ENCODE measurements at regions of chr6 and their contacts with region 1.

Region 1: GRCh38 chr6:27753668-27754407 is 158.4 kb downstream of the OR2B2 start:
- DNase-seq: peak in 8 of 9 donors; percentile 38 to 69 (median 45)
- ATAC-seq: peak; percentile 22
- H3K4me3 ChIP-seq: peak overlapping the region; percentile 80
- H3K4me3 Mint-ChIP-seq: peak overlapping the region; percentile 81 to 99 (median 94)
- H3K27ac ChIP-seq: peak overlapping the region; percentile 96
- H3K27ac Mint-ChIP-seq: peak overlapping the region; percentile 84 to 100 (median 97)
- H3K4me1 ChIP-seq: peaks cover 6 to 20% of the 10 kb centered on the region in 2 donors
- H3K4me1 Mint-ChIP-seq: peaks cover 17 to 53% (median 39%) of the 10 kb centered on the region in 7 donors
- H3K27me3 ChIP-seq: no peaks in the 10 kb centered on the region
- H3K27me3 Mint-ChIP-seq: peaks cover 0 to 8% (median 0%) of the 10 kb centered on the region in 5 donors

Region 2: GRCh38 chr6:26103770-26104456 is 1649.9 kb before region 1 on chr6:
- CTCF ChIA-PET with region 1: no interaction called
- POLR2A ChIA-PET with region 1: no interaction called
- intact Hi-C with region 1: loop called in 1 of 2 experiments (anchors 1 kb)
- DNase-seq: peak; percentile 83 to 96 (median 95)
- ATAC-seq: peak; percentile 94
- H3K4me3 ChIP-seq: peak overlapping the region; percentile 40
- H3K4me3 Mint-ChIP-seq: peak overlapping the region; percentile 81 to 97 (median 89)
- H3K27ac ChIP-seq: peak overlapping the region; percentile 75
- H3K27ac Mint-ChIP-seq: peak overlapping the region; percentile 96 to 100 (median 98)
- H3K4me1 ChIP-seq: peaks cover 4 to 12% of the 10 kb centered on the region in 2 donors
- H3K4me1 Mint-ChIP-seq: peaks cover 7 to 25% (median 22%) of the 10 kb centered on the region in 7 donors
- H3K27me3 ChIP-seq: no peaks in the 10 kb centered on the region
- H3K27me3 Mint-ChIP-seq: peaks cover 0 to 3% (median 0%) of the 10 kb centered on the region in 5 donors

Region 3: GRCh38 chr6:27177485-27178406 is 576.1 kb before region 1 on chr6:
- CTCF ChIA-PET with region 1: interaction called, 7 read pairs
- POLR2A ChIA-PET with region 1: interaction called, 3 read pairs
- intact Hi-C with region 1: loop called (anchors 1 kb)
- DNase-seq: peak; percentile 49 to 78 (median 66)
- ATAC-seq: peak; percentile 83
- H3K4me3 ChIP-seq: peak overlapping the region; percentile 99
- H3K4me3 Mint-ChIP-seq: peak overlapping the region; percentile 90 to 98 (median 96)
- H3K27ac ChIP-seq: peak overlapping the region; percentile 74
- H3K27ac Mint-ChIP-seq: peak overlapping the region; percentile 79 to 100 (median 95)
- H3K4me1 ChIP-seq: peaks cover 0 to 3% of the 10 kb centered on the region in 2 donors
- H3K4me1 Mint-ChIP-seq: peaks cover 0 to 33% (median 14%) of the 10 kb centered on the region in 7 donors
- H3K27me3 ChIP-seq: no peaks in the 10 kb centered on the region
- H3K27me3 Mint-ChIP-seq: peaks cover 0 to 37% (median 0%) of the 10 kb centered on the region in 5 donors

Region 4: GRCh38 chr6:27479319-27480182 is 274.3 kb before region 1 on chr6:
- CTCF ChIA-PET with region 1: interaction called, 8 read pairs
- POLR2A ChIA-PET with region 1: interaction called, 25 read pairs
- intact Hi-C with region 1: loop called (anchors 1 kb)
- DNase-seq: peak; percentile 84 to 97 (median 95)
- ATAC-seq: peak; percentile 83
- H3K4me3 ChIP-seq: peak overlapping the region; percentile 95
- H3K4me3 Mint-ChIP-seq: no peak overlapping the region
- H3K27ac ChIP-seq: peak overlapping the region; percentile 97
- H3K27ac Mint-ChIP-seq: no peak overlapping the region
- H3K4me1 ChIP-seq: peaks cover 9 to 12% of the 10 kb centered on the region in 2 donors
- H3K4me1 Mint-ChIP-seq: peaks cover 0 to 9% (median 5%) of the 10 kb centered on the region in 7 donors
- H3K27me3 ChIP-seq: no peaks in the 10 kb centered on the region
- H3K27me3 Mint-ChIP-seq: peaks cover 0 to 17% (median 0%) of the 10 kb centered on the region in 5 donors

Region 5: DNA sequence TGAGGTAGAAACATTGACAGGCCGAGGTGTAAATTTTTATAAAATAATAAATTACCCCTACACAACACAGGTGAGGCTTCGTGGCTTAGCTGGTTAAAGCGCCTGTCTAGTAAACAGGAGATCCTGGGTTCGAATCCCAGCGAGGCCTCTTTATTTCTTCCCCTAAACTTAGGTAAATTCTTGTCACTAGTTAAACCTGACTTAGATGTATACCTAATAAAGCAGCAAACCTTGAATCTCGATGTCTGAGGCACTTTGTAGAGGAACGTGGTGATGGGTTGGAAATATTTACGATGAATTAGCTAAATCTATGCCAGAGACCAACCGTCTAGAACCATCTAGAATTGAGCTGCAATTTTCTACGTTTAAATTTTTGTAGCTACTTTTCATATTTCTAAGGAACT is 27.2 kb before region 1 on chr6:
- CTCF ChIA-PET with region 1: no interaction called
- POLR2A ChIA-PET with region 1: no interaction called
- intact Hi-C with region 1: no loop called
- DNase-seq: no peak
- ATAC-seq: no peak
- H3K4me3 ChIP-seq: no peak overlapping the region
- H3K4me3 Mint-ChIP-seq: no peak overlapping the region
- H3K27ac ChIP-seq: no peak overlapping the region
- H3K27ac Mint-ChIP-seq: no peak overlapping the region
- H3K4me1 ChIP-seq: no peaks in the 10 kb centered on the region
- H3K4me1 Mint-ChIP-seq: peaks cover 0 to 6% (median 0%) of the 10 kb centered on the region in 7 donors
- H3K27me3 ChIP-seq: no peaks in the 10 kb centered on the region
- H3K27me3 Mint-ChIP-seq: peaks cover 33 to 73% (median 58%) of the 10 kb centered on the region in 5 donors

Region 6: GRCh38 chr6:27742833-27743573 is 10.8 kb before region 1 on chr6:
- CTCF ChIA-PET with region 1: interaction called, 6 read pairs
- POLR2A ChIA-PET with region 1: interaction called, 8 read pairs
- intact Hi-C with region 1: loop called (anchors 1 kb)
- DNase-seq: no peak
- ATAC-seq: no peak
- H3K4me3 ChIP-seq: no peak overlapping the region
- H3K4me3 Mint-ChIP-seq: no peak overlapping the region
- H3K27ac ChIP-seq: no peak overlapping the region
- H3K27ac Mint-ChIP-seq: no peak overlapping the region
- H3K4me1 ChIP-seq: no peaks in the 10 kb centered on the region
- H3K4me1 Mint-ChIP-seq: peaks cover 2 to 23% (median 7%) of the 10 kb centered on the region in 7 donors
- H3K27me3 ChIP-seq: peaks cover 0 to 7% of the 10 kb centered on the region in 2 donors
- H3K27me3 Mint-ChIP-seq: peaks cover 33 to 53% (median 34%) of the 10 kb centered on the region in 5 donors

Region 7: GRCh38 chr6:27893059-27893835 is 139.4 kb after region 1 on chr6:
- CTCF ChIA-PET with region 1: interaction called, 13 read pairs
- POLR2A ChIA-PET with region 1: interaction called, 32 read pairs
- intact Hi-C with region 1: loop called (anchors 1 kb)
- DNase-seq: peak; percentile 75 to 95 (median 92)
- ATAC-seq: peak; percentile 83
- H3K4me3 ChIP-seq: peak overlapping the region; percentile 72
- H3K4me3 Mint-ChIP-seq: no peak overlapping the region
- H3K27ac ChIP-seq: peak overlapping the region; percentile 82
- H3K27ac Mint-ChIP-seq: peak overlapping the region in 1 of 9 donors; percentile 97
- H3K4me1 ChIP-seq: peaks cover 4 to 20% of the 10 kb centered on the region in 2 donors
- H3K4me1 Mint-ChIP-seq: peaks cover 9 to 55% (median 30%) of the 10 kb centered on the region in 7 donors
- H3K27me3 ChIP-seq: no peaks in the 10 kb centered on the region
- H3K27me3 Mint-ChIP-seq: peaks cover 0 to 8% (median 0%) of the 10 kb centered on the region in 5 donors

Region 8: GRCh38 chr6:28880894-28881780 is 1127.3 kb after region 1 on chr6:
- CTCF ChIA-PET with region 1: no interaction called
- POLR2A ChIA-PET with region 1: no interaction called
- intact Hi-C with region 1: loop called in 1 of 2 experiments (anchors 5 kb)
- DNase-seq: peak in 8 of 9 donors; percentile 39 to 73 (median 57)
- ATAC-seq: no peak
- H3K4me3 ChIP-seq: peak overlapping the region; percentile 57
- H3K4me3 Mint-ChIP-seq: peak overlapping the region; percentile 12 to 92 (median 89)
- H3K27ac ChIP-seq: peak overlapping the region; percentile 12
- H3K27ac Mint-ChIP-seq: peak overlapping the region; percentile 14 to 98 (median 91)
- H3K4me1 ChIP-seq: peaks cover 8 to 26% of the 10 kb centered on the region in 2 donors
- H3K4me1 Mint-ChIP-seq: peaks cover 19 to 55% (median 45%) of the 10 kb centered on the region in 7 donors
- H3K27me3 ChIP-seq: no peaks in the 10 kb centered on the region
- H3K27me3 Mint-ChIP-seq: peaks cover 0 to 39% (median 3%) of the 10 kb centered on the region in 5 donors

Measured in naive thymus-derived CD4-positive, alpha-beta T cell (primary cell).